ENCODE measurements at regions of chr9 and their contacts with region 1.

Region 1: DNA sequence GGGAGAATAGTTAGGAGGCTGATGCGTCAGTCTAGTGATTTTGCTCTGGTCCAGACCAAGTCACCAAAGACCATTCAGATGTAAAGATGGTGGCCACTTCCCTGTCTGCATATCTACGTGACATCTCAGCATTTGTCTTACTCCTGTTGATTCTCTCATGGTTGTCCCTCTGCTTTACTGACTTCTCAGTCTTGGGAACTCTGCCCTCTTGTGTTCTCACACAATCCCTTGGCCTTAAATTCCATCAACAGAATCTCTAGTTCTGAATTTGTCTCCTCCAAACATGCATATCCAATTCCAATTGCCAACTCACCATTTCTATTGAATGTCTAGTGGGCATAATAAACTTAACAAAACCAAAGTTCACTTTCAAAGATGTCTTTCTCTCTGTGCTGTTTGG is 147.8 kb downstream of the SLC24A2 start:
- DNase-seq: no peak
- H3K4me3 ChIP-seq: no peak overlapping the region
- H3K27ac ChIP-seq: peak overlapping the region in 58 of 59 donors; percentile 51 to 96 (median 86)
- H3K27me3 ChIP-seq: no peaks in the 10 kb centered on the region
- CTCF ChIP-seq: peak in 52 of 56 donors; percentile 11 to 72 (median 43)

Region 2: DNA sequence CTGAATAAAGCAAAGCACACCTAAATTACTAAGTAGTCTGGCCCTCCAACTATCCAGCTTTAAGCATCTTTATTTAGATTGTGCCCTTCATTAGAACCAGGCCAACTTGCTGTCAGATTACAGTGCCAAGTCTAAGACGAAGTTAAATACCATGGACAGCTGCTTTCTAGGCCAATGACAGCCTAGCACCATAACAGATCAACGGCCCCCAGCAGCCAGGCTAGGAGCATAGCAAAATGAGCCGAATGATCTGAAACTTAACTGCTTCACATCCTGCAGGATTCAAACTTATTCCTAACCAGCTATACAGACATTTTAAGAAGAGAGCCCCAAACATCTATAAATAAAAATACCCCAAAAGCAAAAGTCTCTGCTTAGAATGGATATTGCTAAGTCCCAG is 141.0 kb after region 1 on chr9:
- intact Hi-C with region 1: loop called in 1 of 2 experiments (anchors 10 kb)
- DNase-seq: peak in 2 of 10 donors; percentile 42 to 56
- H3K4me3 ChIP-seq: peak overlapping the region; percentile 3 to 89 (median 77)
- H3K27ac ChIP-seq: peak overlapping the region in 52 of 59 donors; percentile 2 to 98 (median 92)
- H3K27me3 ChIP-seq: no peaks in the 10 kb centered on the region
- CTCF ChIP-seq: no peak

Region 3: GRCh38 chr9:20209391-20210340 is 568.6 kb after region 1 on chr9:
- intact Hi-C with region 1: no loop called
- DNase-seq: no peak
- H3K4me3 ChIP-seq: no peak overlapping the region
- H3K27ac ChIP-seq: no peak overlapping the region
- H3K27me3 ChIP-seq: peaks cover 0 to 4% (median 0%) of the 10 kb centered on the region in 45 donors
- CTCF ChIP-seq: no peak